ENCODE measurements at regions of chr19 and their contacts with region 1.

Region 1: DNA sequence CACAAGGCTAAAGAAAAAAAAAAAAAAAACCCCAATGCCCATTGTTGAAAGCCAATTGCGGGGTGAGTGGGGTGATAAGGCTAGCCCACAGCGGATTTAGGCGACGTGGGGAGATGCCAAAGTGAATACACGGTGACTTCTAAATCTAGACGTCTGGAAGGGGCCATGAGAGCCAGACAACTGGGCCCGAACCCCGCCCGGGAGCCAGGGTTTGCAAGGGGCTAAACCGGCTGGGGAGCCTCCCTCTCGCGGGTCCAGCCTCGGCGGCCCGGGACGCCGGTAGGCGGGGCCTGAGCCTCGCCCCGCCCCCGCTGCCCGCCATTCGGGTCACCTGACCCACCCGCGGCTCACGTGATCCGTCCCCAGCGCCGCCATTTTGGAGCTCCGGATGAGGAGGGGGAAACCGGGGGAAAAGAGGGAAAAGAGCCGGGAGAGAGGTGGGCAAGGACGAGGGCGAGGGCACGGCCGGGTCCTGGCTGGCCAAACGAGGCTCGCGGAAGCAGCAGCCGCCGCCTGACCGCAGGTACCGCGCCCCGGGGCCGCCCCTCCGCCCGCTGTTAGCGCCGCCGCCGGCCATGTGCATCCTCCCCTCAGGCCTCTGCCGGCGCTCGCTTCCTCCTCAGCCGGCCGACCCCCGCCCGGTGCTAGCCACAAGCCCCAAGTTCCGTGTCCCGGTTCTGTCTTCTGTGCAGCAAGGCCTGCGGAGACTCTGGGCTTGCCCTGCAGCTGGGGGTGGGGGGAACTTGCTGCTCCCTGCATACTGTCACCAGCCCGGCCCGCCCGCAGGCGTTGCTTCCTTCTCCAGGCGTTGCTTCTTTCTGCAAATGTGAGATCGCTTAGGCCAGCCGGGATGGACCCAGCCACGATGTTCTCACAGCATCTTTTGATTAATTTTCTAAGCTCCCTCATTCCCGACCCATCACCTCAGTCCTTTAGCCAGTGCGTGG is at the start of gene ZNF507:
- DNase-seq: peak; percentile 69 to 89 (median 80)
- H3K4me3 ChIP-seq: peak within 1 kb of the TSS; percentile 71 to 99 (median 90)
- H3K27ac ChIP-seq: peak within 1 kb of the TSS in 58 of 59 donors; percentile 1 to 95 (median 88)
- H3K27me3 ChIP-seq: no peaks in the 10 kb centered on the region
- CTCF ChIP-seq: peak in 51 of 56 donors; percentile 9 to 68 (median 41)
- total RNA-seq, gene ZNF507: 23.3 to 42.1 (median 34.2) TPM

Region 2: GRCh38 chr19:32367948-32368536 is 22.5 kb after region 1 on chr19:
- intact Hi-C with region 1: no loop called
- DNase-seq: no peak
- H3K4me3 ChIP-seq: no peak overlapping the region
- H3K27ac ChIP-seq: peak overlapping the region in 3 of 59 donors; percentile 10 to 51 (median 21)
- H3K27me3 ChIP-seq: no peaks in the 10 kb centered on the region
- CTCF ChIP-seq: no peak

Region 3: DNA sequence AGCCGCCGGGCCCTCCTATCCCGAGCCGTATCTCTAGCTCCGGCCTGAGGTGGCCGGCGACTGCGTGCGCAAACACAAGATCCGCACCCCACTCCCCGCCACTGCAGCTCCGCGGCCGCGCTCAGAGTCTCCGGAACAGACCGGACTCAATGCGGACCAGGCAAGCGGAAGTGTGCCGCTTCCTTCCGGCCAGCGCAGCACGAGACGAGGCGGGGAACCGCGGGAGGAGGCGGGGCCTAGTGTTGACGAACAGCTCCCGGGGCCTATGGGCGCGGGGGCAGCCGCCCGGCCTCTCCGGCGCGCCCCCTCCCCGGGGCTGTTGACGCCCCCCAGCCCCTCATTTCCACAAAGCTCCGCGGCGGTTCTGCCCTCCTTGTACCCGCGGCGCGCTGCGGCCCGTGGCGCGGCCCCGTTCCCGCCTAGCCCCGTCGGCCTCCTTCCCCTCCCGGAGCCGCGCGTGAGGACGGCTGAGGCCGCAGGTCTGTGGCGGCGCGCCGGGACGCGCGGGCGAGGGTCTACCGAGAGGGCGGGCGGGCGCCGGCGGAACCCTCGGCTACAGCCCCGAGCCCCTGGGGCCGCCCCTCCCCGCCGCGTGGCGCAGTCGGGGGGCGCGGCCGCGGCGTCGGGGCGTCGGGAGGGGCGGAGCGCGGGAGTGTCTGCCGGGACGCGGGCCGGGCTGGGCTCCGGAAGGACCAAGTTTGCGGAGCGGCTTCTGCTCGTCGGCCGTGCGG is 60.1 kb after region 1 on chr19 and contains the start of gene DPY19L3:
- intact Hi-C with region 1: loop called (anchors 2 to 5 kb)
- DNase-seq: peak; percentile 94 to 98 (median 97)
- H3K4me3 ChIP-seq: peak within 1 kb of the TSS; percentile 67 to 95 (median 87)
- H3K27ac ChIP-seq: peak within 1 kb of the TSS; percentile 74 to 99 (median 96)
- H3K27me3 ChIP-seq: no peaks in the 10 kb centered on the region
- CTCF ChIP-seq: peak in 11 of 56 donors; percentile 4 to 40 (median 24)
- total RNA-seq, gene DPY19L3: 22.7 to 83.2 (median 48.3) TPM

Region 4: DNA sequence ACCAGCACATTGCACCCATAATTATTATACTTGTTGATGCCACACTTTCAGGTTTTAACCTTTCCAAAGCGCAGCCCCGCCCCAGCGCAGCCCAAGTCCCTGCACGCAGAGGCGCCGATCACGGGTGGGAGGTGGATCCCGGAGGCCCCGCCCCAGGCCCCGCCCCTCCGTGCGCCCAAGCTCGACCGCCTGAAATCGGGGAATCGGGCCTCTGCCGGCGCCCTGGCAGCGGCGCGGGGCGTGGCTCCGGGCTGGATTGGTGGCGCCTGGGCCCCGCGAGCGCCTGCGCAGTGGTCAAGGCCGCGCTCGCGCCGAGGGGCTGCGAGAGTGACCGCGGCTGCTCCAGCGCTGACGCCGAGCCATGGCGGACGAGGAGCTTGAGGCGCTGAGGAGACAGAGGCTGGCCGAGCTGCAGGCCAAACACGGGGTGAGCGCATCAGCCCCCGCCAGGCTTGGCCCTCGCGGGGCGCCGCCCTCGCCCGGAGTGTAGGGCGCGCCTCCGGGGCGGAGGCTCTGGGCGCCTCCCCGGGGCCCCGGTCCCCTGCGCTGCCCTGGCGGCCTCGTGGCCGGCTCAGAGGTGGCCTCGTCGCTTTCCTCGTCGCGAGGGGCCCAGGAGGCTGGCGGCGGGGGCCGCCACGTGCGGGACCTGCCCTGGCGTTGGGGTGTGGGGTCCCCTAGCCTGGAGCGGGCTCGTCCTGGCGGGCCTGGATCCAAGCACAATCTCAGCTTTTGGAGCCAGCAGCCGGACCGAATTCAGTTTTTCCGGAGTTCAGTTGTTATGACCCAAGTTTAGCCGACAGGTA is 235.6 kb after region 1 on chr19 and contains the start of gene PDCD5:
- intact Hi-C with region 1: loop called in 1 of 2 experiments (anchors 5 kb)
- DNase-seq: peak; percentile 91 to 98 (median 96)
- H3K4me3 ChIP-seq: peak within 1 kb of the TSS; percentile 63 to 100 (median 91)
- H3K27ac ChIP-seq: peak within 1 kb of the TSS in 54 of 59 donors; percentile 9 to 89 (median 79)
- H3K27me3 ChIP-seq: no peaks in the 10 kb centered on the region
- CTCF ChIP-seq: peak in 30 of 56 donors; percentile 5 to 61 (median 28)
- total RNA-seq, gene PDCD5: 34.0 to 109 (median 63.1) TPM